ENCODE measurements at regions of chr13 and their contacts with region 1.

Region 1: GRCh38 chr13:98549006-98549727 is 27.7 kb downstream of the STK24 start:
- DNase-seq: no peak
- H3K4me3 Mint-ChIP-seq: no peak overlapping the region
- H3K27ac Mint-ChIP-seq: peak overlapping the region; percentile 79
- H3K4me1 Mint-ChIP-seq: peaks cover 84% of the 10 kb centered on the region
- H3K27me3 Mint-ChIP-seq: no peaks in the 10 kb centered on the region

Region 2: GRCh38 chr13:98429977-98430736 is 119.0 kb before region 1 on chr13:
- CTCF ChIA-PET with region 1: no interaction called
- POLR2A ChIA-PET with region 1: no interaction called
- intact Hi-C with region 1: no loop called
- DNase-seq: no peak
- H3K4me3 Mint-ChIP-seq: no peak overlapping the region
- H3K27ac Mint-ChIP-seq: no peak overlapping the region
- H3K4me1 Mint-ChIP-seq: no peaks in the 10 kb centered on the region
- H3K27me3 Mint-ChIP-seq: peaks cover 24% of the 10 kb centered on the region

Region 3: GRCh38 chr13:98517576-98518310 is 31.4 kb before region 1 on chr13:
- CTCF ChIA-PET with region 1: no interaction called
- POLR2A ChIA-PET with region 1: interaction called, 4 read pairs
- intact Hi-C with region 1: loop called (anchors 2 kb)
- DNase-seq: peak; percentile 75
- H3K4me3 Mint-ChIP-seq: peak overlapping the region; percentile 53
- H3K27ac Mint-ChIP-seq: peak overlapping the region; percentile 93
- H3K4me1 Mint-ChIP-seq: peaks cover 98% of the 10 kb centered on the region
- H3K27me3 Mint-ChIP-seq: no peaks in the 10 kb centered on the region

Region 4: GRCh38 chr13:98565726-98566565 is 16.8 kb after region 1 on chr13:
- CTCF ChIA-PET with region 1: interaction called, 3 read pairs
- POLR2A ChIA-PET with region 1: interaction called, 13 read pairs
- intact Hi-C with region 1: loop called (anchors 1 kb)
- DNase-seq: no peak
- H3K4me3 Mint-ChIP-seq: peak overlapping the region; percentile 54
- H3K27ac Mint-ChIP-seq: peak overlapping the region; percentile 98
- H3K4me1 Mint-ChIP-seq: peaks cover 88% of the 10 kb centered on the region
- H3K27me3 Mint-ChIP-seq: no peaks in the 10 kb centered on the region

Region 5: DNA sequence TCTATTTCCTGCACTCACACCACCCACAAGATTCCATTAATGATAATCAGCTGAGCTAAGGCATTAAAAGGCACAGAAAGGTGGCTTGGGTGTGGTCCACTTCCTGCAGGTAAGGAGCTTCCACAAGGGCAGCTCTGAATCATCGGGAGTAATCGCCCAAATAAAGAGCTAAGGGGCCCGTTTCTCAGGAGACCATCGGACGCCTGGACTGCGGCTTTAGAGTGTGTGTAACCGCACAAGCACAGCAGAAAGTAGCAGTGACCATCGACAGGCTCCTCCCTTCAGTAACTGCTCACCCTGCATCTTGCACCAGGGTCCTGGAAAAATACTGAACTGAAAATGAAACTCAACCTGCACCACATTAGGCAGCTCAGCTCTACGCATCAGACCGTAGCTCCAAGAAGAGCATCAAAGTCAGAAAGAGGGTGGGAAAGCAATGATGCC is 21.8 kb after region 1 on chr13:
- CTCF ChIA-PET with region 1: interaction called, 3 read pairs
- POLR2A ChIA-PET with region 1: interaction called, 13 read pairs
- intact Hi-C with region 1: loop called (anchors 1 kb)
- DNase-seq: peak; percentile 67
- H3K4me3 Mint-ChIP-seq: peak overlapping the region; percentile 75
- H3K27ac Mint-ChIP-seq: peak overlapping the region; percentile 98
- H3K4me1 Mint-ChIP-seq: peaks cover 89% of the 10 kb centered on the region
- H3K27me3 Mint-ChIP-seq: no peaks in the 10 kb centered on the region

Region 6: DNA sequence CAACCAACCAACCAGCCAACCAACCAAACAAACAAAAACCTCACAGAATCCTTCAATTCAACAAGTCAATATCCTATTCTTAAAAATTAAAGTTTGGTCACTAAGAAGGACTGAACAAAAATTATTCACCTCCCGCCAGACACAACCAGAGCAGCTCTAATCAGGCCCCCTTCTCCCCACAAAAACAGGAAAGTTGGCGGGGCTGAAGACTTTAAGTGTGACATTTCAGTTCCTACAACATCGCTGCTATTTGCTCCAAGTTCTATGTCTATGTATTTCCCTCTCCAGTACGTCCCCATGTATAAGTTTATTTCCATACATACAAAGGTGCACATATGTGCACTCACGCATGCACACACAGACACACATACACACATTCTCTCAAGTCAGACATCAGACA is 60.6 kb after region 1 on chr13:
- CTCF ChIA-PET with region 1: no interaction called
- POLR2A ChIA-PET with region 1: no interaction called
- intact Hi-C with region 1: no loop called
- DNase-seq: no peak
- H3K4me3 Mint-ChIP-seq: no peak overlapping the region
- H3K27ac Mint-ChIP-seq: no peak overlapping the region
- H3K4me1 Mint-ChIP-seq: peaks cover 2% of the 10 kb centered on the region
- H3K27me3 Mint-ChIP-seq: no peaks in the 10 kb centered on the region

Measured in activated CD4-positive, alpha-beta memory T cell treated with anti-CD3 and anti-CD28 coated beads for 36 hours (primary cell).